ENCODE measurements at regions of chr7 and their contacts with region 1.

Region 1: GRCh38 chr7:156969972-156970420 is 20.5 kb downstream of the NOM1 start:
- DNase-seq: no peak
- H3K4me3 ChIP-seq: no peak overlapping the region
- H3K27ac ChIP-seq: no peak overlapping the region
- H3K4me1 ChIP-seq: no peaks in the 10 kb centered on the region
- H3K27me3 ChIP-seq: no peaks in the 10 kb centered on the region
- CTCF ChIP-seq: peak in 2 of 3 experiments; percentile 39
- EP300 ChIP-seq: no peak
- POLR2A ChIP-seq: no peak

Region 2: DNA sequence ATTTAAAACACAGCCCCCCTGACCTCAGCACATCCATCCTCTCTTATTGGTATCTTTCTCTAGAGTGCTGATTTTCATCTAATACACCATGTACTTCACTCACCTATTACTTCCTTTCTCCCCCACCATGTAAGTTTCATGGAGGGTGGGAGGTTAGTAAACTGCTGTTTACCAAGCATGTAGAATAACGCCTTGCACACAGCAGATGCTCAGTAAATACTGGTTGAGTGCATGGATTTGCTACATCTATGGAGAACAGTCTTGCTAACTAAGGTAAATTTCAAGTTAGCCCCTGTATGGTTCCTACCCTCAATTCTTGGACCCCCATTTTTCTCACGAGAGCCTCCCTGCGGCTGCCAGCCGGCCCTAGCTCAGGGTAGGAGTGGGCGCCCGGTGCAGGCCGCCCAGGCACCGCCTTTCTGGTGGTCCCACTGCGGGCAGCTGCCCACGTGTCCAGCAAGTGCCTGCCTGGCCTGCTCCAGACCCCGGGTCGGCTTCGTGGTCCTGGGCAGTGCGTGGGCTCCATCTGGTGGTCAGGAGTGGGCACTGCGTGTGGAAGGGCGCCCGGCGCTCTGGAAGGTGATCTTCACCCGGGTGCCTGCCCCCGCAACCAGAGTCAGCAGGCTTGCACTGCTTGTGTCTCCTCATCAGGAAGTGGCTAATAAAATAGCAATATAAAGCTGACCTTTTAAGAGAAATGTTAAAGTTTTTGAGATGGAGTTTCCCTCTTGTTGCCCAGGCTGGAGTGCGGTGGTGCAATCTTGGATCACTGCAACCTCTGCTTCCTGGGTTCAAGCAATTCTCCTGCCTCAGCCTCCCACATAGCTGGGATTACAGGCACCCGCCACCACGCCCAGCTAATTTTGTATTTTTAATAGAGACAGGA is 303.5 kb after region 1 on chr7:
- intact Hi-C with region 1: loop called (anchors 10 kb)
- DNase-seq: no peak
- H3K4me3 ChIP-seq: no peak overlapping the region
- H3K27ac ChIP-seq: peak overlapping the region; percentile 70 to 85 (median 79)
- H3K4me1 ChIP-seq: peaks cover 18 to 41% (median 31%) of the 10 kb centered on the region in 4 donors
- H3K27me3 ChIP-seq: peaks cover 0 to 13% (median 0%) of the 10 kb centered on the region in 4 donors
- CTCF ChIP-seq: peak; percentile 97 to 100 (median 97)
- EP300 ChIP-seq: no peak
- POLR2A ChIP-seq: no peak